HepG2 (cell line): ENCODE measurements at regions of chr6 and their contacts with region 1.

Region 1: DNA sequence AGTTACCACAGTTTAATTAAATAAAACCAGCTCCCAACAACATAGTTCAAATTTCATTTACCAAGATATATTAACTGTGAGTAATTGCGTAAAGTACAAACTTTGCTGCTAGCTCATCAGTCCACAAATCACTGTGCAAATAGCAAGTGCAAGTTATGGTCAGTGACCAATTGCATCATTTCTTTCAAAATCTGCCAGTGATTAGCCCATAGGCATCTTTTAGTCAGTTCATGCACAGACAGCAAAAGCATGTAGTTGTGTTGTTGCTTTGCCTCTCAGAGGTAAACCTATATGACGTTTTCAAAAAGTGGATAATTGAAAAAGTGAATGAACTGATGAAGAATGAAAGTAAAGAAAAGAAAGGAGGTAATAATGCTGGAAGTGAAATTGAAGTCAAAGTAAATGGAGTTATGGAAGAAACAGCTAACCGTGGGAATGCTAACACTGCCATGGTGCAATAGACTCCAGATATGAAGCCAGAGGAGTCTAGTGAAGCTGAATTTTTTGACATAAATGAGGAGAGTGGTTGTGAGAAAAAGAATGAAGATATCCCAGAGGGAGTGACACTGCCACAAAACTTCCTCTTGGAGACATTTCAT is 36.5 kb downstream of the ENPP1 start:
- DNase-seq: peak; percentile 98
- ATAC-seq: peak; percentile 92
- H3K4me3 ChIP-seq: peak overlapping the region; percentile 65 to 80 (median 74)
- H3K27ac ChIP-seq: peak overlapping the region; percentile 66
- H3K4me1 ChIP-seq: peaks cover 93% of the 10 kb centered on the region
- H3K27me3 ChIP-seq: no peaks in the 10 kb centered on the region; a peak in 1 of 5 replicates
- CTCF ChIP-seq: no peak
- EP300 ChIP-seq: peak; percentile 86 to 97; a peak in 3 of 4 replicates
- POLR2A ChIP-seq: peak; percentile 72 to 73; a peak in 3 of 4 replicates
- RAD21 ChIP-seq: no peak; the same call in 1 of the 2 replicates

Region 2: DNA sequence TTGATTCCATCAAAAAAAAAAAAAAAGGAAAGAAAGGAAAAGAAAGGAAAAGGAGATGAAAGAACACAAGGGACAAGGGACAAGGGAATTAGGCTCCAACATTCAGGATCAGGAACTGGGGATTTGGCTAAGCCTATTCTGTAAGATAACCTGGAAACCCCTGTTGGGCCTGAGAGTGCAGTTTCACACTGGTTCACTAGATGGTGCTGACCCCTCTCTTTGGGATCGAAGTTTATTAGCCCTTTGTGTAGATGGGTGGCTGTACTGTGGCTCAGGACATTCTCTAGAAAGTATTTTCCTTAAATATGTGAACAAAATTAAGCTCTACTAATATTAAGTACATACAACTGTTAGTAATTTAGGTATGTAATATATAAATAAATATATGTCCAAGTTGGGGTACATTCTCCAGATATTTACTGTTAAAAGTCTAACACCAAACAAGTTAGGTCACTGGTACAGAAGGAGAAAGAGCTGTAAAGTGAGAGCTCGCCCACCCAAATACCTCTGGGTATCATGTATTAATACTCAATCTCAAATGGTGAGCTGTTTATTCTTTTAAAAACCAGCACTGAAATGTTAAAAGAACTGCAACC is 149.4 kb before region 1 on chr6:
- CTCF ChIA-PET with region 1: no interaction called
- POLR2A ChIA-PET with region 1: no interaction called
- in situ Hi-C with region 1: no loop called
- intact Hi-C with region 1: loop called (anchors 5 kb)
- DNase-seq: peak; percentile 77
- ATAC-seq: peak; percentile 100
- H3K4me3 ChIP-seq: no peak overlapping the region
- H3K27ac ChIP-seq: no peak overlapping the region
- H3K4me1 ChIP-seq: no peaks in the 10 kb centered on the region
- H3K27me3 ChIP-seq: no peaks in the 10 kb centered on the region
- CTCF ChIP-seq: peak; percentile 93
- EP300 ChIP-seq: no peak
- POLR2A ChIP-seq: no peak
- RAD21 ChIP-seq: peak; percentile 91

Region 3: DNA sequence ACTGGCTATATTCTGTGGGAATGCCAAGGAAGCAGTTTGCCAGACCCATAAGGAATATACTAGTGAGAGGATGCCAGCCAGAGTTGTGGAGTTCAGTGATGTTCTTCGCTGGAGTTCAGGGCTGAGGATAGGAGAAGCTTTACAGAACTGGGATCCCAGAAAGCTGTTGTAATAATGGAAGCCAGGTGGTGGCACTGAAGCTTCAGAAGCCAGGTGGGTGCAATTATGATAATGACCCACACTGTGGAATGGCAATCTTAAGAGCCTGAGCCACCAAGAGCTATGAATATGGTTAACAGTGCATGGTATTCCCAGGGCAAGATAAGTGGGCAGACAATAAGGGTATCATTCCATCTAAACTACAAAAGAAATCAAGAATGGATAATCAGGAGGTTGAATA is 61.6 kb before region 1 on chr6:
- CTCF ChIA-PET with region 1: no interaction called
- POLR2A ChIA-PET with region 1: no interaction called
- in situ Hi-C with region 1: no loop called
- intact Hi-C with region 1: no loop called
- DNase-seq: no peak
- ATAC-seq: peak; percentile 83
- H3K4me3 ChIP-seq: no peak overlapping the region
- H3K27ac ChIP-seq: no peak overlapping the region
- H3K4me1 ChIP-seq: peaks cover 38% of the 10 kb centered on the region
- H3K27me3 ChIP-seq: no peaks in the 10 kb centered on the region
- CTCF ChIP-seq: peak; percentile 64
- EP300 ChIP-seq: no peak
- POLR2A ChIP-seq: no peak
- RAD21 ChIP-seq: no peak

Region 4: GRCh38 chr6:131823312-131823903 is 20.9 kb before region 1 on chr6:
- CTCF ChIA-PET with region 1: no interaction called
- POLR2A ChIA-PET with region 1: interaction called, 25 read pairs
- in situ Hi-C with region 1: no loop called
- intact Hi-C with region 1: no loop called
- DNase-seq: peak; percentile 79
- ATAC-seq: peak; percentile 70
- H3K4me3 ChIP-seq: no peak overlapping the region
- H3K27ac ChIP-seq: peak overlapping the region; percentile 28
- H3K4me1 ChIP-seq: peaks cover 77% of the 10 kb centered on the region
- H3K27me3 ChIP-seq: no peaks in the 10 kb centered on the region
- CTCF ChIP-seq: no peak
- EP300 ChIP-seq: no peak
- POLR2A ChIP-seq: no peak
- RAD21 ChIP-seq: no peak

Region 5: DNA sequence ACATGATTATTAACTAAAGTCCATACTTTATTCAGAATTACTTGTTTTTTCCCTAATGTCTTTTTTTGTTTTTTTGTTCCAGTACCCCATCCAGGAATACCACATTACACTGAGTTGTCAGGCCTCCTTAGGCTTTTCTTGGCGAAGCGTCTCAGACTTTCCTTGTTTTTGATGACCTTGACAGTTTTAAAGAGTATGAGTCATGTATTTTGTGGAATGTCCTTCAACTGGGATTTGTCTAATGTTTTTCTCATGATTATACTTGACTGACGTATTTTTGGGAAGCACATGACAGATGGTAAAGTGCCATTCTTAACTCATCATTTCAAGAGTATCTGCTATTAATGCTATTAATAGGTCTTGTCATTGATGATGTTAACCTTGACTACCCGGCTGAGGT is 12.9 kb before region 1 on chr6:
- CTCF ChIA-PET with region 1: no interaction called
- POLR2A ChIA-PET with region 1: interaction called, 25 read pairs
- in situ Hi-C with region 1: no loop called
- intact Hi-C with region 1: loop called (anchors 1 kb)
- DNase-seq: no peak
- ATAC-seq: no peak
- H3K4me3 ChIP-seq: no peak overlapping the region
- H3K27ac ChIP-seq: no peak overlapping the region
- H3K4me1 ChIP-seq: peaks cover 54% of the 10 kb centered on the region
- H3K27me3 ChIP-seq: no peaks in the 10 kb centered on the region
- CTCF ChIP-seq: no peak
- EP300 ChIP-seq: no peak
- POLR2A ChIP-seq: no peak
- RAD21 ChIP-seq: no peak

Region 6: GRCh38 chr6:131867744-131868143 is 23.4 kb after region 1 on chr6:
- CTCF ChIA-PET with region 1: no interaction called
- POLR2A ChIA-PET with region 1: interaction called, 12 read pairs
- in situ Hi-C with region 1: no loop called
- intact Hi-C with region 1: no loop called
- DNase-seq: peak; percentile 92
- ATAC-seq: peak; percentile 75
- H3K4me3 ChIP-seq: no peak overlapping the region
- H3K27ac ChIP-seq: peak overlapping the region; percentile 28
- H3K4me1 ChIP-seq: peaks cover 39% of the 10 kb centered on the region
- H3K27me3 ChIP-seq: no peaks in the 10 kb centered on the region
- CTCF ChIP-seq: no peak
- EP300 ChIP-seq: peak in 1 of 2 experiments; percentile 63; a peak in 2 of 4 replicates
- POLR2A ChIP-seq: no peak
- RAD21 ChIP-seq: no peak

Region 7: DNA sequence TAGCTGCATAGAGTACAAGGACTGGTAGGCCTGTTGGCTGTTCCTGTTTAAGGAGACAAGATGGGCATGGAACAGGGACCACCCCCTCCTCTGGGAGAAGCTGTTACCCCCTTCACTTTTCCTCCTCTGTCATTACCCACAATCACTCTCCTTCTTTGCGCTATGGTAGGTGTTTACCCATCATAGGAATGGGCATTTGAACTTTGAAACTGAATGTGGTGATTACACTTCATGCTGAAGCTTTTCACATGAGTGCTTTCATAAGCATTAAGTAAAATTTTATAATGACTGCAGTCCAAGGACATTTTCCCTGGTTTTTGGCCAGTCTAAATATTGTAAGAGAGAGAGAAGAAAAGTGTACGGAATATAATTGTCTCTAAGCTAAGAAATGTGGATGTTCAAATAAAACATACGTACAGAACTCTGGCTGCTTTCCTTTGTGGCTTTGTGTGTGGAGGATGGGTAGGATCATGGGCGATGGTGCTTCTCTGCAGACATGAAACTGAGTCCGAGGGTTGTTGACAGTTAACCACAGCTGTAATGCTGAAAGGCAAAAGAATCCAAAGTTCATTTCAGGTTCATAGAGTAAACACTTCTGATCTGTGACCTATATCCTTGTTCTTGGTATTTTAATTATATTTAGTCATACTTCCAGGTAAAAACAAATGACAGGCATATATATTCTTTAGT is 50.5 kb after region 1 on chr6:
- CTCF ChIA-PET with region 1: no interaction called
- POLR2A ChIA-PET with region 1: interaction called, 41 read pairs
- in situ Hi-C with region 1: no loop called
- intact Hi-C with region 1: loop called (anchors 1 kb)
- DNase-seq: peak; percentile 99
- ATAC-seq: peak; percentile 82
- H3K4me3 ChIP-seq: peak overlapping the region in 2 of 3 experiments; percentile 35 to 57; a peak in 3 of 6 replicates
- H3K27ac ChIP-seq: peak overlapping the region; percentile 97
- H3K4me1 ChIP-seq: peaks cover 68% of the 10 kb centered on the region
- H3K27me3 ChIP-seq: no peaks in the 10 kb centered on the region
- CTCF ChIP-seq: no peak
- EP300 ChIP-seq: peak; percentile 91 to 96; a peak in 3 of 4 replicates
- POLR2A ChIP-seq: peak; percentile 30 to 71; a peak in 3 of 4 replicates
- RAD21 ChIP-seq: peak; percentile 38; the same call in 1 of the 2 replicates